Posterior vena cava (tissue), 2 donors: ENCODE measurements at regions of chr2 and their contacts with region 1.

Region 1: GRCh38 chr2:142813830-142814829 is 63.3 kb upstream of the KYNU start:
- DNase-seq: no peak

Region 2: DNA sequence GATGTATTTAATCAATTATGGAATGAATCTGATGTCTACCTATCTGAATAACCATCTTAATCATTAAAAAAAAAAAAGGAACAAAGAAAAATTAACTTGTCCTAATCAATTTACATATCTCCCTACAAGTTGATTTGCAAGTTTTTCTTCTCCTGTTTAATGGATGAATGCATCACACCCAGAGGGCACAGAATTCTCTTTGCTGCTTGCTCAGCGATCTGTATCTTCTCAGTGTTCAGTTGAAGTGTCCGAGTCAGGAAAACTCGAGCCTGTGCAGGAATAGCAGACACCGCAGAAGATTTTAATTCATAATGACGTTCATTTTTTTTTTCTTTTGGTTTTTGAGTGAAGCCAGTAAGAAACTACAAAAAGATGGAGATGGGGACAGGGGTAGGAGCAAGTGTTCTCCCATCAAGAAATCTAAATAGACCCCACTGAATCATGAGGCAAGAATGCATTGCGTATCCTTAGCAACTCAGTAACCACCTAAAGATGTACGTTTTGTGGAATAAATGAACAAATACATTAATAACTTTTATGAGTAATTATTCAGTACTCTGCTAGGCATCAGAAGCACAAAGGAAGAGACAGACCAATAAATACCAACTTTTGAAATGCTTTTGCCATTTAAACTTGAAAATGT is 1358.8 kb before region 1 on chr2:
- intact Hi-C with region 1: no loop called
- DNase-seq: no peak

Region 3: DNA sequence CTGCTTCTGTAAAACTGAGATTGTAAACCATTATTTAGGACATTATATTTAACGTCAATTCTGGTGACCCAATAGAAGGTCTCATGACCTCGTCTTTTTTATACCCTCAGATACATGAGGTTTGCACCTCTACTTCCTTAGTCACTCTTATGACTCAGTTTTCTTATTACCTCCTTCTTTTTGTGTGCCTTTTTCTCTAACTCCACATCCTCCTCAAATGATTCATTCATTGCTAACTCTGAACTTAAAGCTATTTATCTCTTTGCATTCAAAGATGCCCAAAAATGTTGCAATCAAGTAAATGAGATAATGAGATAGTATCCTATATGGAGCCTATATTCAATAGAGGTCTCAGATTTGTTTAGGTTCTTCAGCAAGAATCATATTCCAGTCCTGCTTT is 57.7 kb before region 1 on chr2:
- intact Hi-C with region 1: loop called in 1 of 2 experiments (anchors 2 kb)
- DNase-seq: no peak